Aorta (tissue), 5 donors: ENCODE measurements at regions of chr5 and their contacts with region 1.

Region 1: DNA sequence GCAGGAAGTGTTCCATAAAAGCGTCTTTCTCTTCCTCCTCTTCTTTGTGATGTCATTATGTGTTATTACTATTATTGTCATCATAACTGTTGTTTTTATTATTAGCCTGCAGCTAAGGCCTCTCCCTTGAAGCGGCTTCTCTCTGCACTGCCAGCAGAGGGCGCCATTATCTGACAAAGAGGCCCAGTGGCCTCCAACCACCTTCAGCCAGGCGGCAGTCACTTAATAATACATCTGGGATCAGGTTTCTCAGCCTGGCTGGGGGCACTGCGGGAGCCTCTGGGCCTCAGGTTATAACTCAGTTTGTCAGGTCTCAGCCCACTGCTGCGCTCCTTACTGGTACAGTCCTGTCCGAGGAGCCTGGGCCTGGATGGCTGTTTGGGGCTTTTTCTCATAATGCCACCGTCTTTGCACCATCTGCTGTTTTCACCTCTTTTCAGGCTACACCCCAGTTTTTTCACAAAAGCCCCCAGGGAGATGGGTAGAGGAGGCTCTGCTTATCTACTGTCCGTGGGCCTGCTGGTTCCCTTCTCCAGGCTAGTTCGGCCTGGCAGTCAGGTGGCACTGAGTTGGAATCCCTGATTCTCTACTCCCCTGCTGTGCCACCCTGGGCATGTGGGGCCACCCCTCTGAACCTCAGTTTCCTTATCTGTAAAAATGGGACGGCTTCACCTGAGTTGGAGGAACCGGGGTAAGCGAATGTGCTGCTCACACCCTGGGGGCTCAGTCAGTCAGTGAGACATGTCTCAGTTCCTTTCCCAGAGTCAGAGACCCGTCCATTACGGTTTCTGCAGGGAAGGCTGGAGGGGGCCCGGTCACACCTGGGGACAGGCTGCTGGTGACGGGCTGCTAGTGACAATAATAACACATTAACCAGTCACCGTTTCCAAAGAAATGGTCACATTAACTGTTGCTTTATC is 282.1 kb downstream of the NSG2 start:
- DNase-seq: peak; percentile 82 to 88
- ATAC-seq: no peak
- H3K4me3 ChIP-seq: no peak overlapping the region
- H3K27ac ChIP-seq: no peak overlapping the region
- H3K4me1 ChIP-seq: no peaks in the 10 kb centered on the region
- H3K27me3 ChIP-seq: peaks cover 0 to 1% of the 10 kb centered on the region in 2 donors

Region 2: DNA sequence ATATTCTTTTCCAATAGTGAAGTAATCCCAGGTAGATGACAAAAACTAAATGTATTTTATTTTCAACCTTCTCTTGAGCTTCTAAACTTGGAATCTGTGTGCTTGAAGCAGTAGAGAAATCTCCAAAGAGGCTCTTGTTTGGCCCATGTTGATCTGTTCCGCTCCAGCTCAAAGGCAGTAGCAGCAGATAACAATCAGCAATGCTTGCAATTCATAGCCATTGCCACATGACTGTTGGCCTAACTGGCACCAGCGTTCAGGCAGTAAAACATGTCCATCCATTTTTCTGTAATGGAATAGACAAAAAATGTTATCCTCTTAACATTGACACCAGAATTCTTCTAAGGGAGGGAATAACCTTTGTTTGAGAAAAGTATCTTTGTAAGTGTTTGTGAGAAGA is 126.1 kb after region 1 on chr5:
- intact Hi-C with region 1: no loop called
- DNase-seq: no peak
- ATAC-seq: no peak
- H3K4me3 ChIP-seq: no peak overlapping the region
- H3K27ac ChIP-seq: no peak overlapping the region
- H3K4me1 ChIP-seq: no peaks in the 10 kb centered on the region
- H3K27me3 ChIP-seq: peaks cover 0 to 1% of the 10 kb centered on the region in 2 donors

Region 3: DNA sequence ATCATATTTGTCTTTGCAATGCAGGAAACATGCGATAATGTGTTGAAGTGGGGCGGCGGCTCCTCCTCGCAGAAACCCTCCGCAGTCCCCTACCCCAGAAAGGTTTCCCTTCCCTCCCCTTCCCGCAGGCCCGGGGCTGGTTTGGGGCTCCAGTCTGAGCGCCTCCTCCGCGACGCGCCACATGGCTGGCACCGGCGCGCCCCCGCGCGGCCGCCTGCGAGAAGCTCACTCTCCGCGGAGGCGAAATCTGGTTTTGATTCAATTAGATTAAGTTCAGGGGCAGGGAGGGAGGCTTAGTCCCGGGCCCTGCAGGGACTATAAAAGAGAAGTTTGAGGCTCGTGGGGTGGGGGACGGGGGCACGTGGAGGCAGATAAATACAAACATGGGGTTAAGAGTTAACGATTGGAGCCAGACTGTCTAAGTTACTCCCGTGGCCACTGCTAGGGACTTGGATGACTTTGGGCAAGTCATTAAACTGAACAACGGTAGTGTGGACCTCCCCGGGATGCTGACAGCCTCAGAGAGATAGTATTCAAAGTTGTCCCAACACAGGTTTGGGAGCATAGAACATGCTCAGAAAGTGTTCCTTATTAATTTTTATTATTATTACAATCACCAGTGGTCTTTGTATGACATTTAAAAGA is 466.2 kb after region 1 on chr5:
- intact Hi-C with region 1: loop called in 1 of 2 experiments (anchors 2 kb)
- DNase-seq: peak; percentile 56 to 87
- ATAC-seq: peak; percentile 84
- H3K4me3 ChIP-seq: no peak overlapping the region
- H3K27ac ChIP-seq: no peak overlapping the region
- H3K4me1 ChIP-seq: no peaks in the 10 kb centered on the region
- H3K27me3 ChIP-seq: no peaks in the 10 kb centered on the region

Region 4: GRCh38 chr5:174935854-174936474 is 608.4 kb after region 1 on chr5:
- intact Hi-C with region 1: loop called in 1 of 2 experiments (anchors 5 kb)
- DNase-seq: peak in 1 of 2 donors; percentile 58
- ATAC-seq: no peak
- H3K4me3 ChIP-seq: no peak overlapping the region
- H3K27ac ChIP-seq: no peak overlapping the region
- H3K4me1 ChIP-seq: no peaks in the 10 kb centered on the region
- H3K27me3 ChIP-seq: no peaks in the 10 kb centered on the region